Vagina (tissue), 2 donors: ENCODE measurements at regions of chr11 and their contacts with region 1.

Region 1: GRCh38 chr11:123033895-123034294 is 28.0 kb downstream of the HSPA8 start:
- DNase-seq: no peak
- H3K4me3 ChIP-seq: no peak overlapping the region
- H3K27ac ChIP-seq: no peak overlapping the region
- H3K4me1 ChIP-seq: no peaks in the 10 kb centered on the region
- H3K27me3 ChIP-seq: no peaks in the 10 kb centered on the region
- CTCF ChIP-seq: peak in 1 of 3 experiments; percentile 3
- POLR2A ChIP-seq: no peak

Region 2: DNA sequence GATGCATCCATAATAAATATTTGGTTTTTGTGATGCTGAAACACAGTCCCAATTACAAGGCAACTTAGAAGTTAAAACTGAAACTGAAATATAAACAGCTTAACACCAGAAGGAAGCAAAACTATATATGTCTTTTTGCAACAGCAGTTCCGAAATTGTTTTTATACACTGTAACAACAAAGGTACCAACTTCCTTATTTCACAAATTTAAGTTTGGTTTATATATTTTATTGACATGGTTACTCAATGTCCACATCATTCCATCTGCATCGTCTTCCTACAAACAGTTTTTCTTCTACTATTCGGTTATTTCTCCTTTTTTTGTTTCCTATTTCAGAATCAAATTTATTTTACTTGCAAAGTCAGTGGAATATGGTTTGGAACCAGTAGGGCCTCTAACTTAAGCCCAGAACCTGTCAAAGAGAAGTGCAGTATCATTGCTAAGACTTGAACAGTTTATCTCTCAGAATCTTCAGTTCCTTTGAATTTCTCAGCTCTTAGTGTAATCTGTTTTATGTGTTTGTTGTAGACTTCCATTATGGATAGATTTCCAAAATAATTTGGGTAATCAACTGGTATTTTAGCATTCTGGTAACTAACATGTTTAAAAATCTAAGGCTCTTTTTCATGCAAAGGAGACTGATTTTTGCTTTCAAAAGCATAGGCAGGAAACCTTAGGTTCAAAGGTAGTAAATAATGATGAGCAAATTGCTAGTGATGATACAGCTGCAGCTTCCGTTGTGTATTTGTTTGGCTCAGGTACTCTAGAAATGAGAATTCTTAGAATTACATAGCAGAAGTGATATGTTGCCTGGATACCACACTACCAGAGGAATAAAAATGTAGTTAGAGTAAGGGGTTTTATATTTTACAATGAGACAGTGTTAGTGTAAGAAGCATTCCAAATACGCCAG is 36.3 kb after region 1 on chr11:
- intact Hi-C with region 1: no loop called
- DNase-seq: no peak
- H3K4me3 ChIP-seq: peak overlapping the region; percentile 8 to 21
- H3K27ac ChIP-seq: peak overlapping the region; percentile 59
- H3K4me1 ChIP-seq: peaks cover 11% of the 10 kb centered on the region
- H3K27me3 ChIP-seq: no peaks in the 10 kb centered on the region
- CTCF ChIP-seq: no peak
- POLR2A ChIP-seq: no peak

Region 3: DNA sequence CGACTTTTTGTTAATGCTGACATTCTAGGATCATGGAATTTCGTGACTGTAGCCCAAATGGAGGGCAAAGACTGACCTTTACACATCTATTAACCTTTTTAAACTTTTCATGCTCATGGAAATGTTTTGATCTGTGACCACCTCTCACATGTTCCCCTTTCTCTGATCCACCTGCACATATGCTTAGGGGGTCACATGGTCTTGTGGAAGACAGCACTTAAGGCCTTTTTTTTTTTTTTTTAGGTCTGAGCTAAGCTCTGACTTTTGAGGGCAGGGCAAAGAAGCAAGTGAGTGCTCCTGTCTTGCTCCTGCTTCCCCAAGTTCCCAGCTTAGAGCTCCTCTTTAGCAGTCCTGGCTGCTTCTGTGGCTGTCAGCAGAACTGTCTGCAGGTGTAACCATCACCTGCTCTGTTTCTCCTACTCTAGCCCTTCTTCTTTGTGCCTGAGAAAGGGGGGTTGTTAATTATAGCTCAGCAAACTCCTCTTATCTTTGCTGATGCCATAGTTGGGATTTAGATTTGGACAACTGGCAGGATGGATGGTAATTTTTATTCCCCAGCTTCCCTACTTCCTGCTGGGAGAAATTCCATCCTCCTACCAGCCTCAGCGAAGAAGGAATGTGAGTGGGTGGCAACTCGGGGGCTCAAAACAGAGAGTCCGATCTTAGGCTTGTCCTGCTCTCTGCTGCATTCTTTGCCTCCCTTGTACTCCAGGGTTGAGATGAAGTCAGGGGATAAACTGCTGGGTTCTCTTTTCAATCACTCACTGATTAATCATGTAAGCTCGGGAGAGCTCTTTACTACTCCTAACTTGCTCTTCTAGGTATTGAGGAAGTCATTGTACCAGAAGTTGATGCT is 460.5 kb after region 1 on chr11:
- intact Hi-C with region 1: loop called (anchors 5 kb)
- DNase-seq: no peak
- H3K4me3 ChIP-seq: no peak overlapping the region
- H3K27ac ChIP-seq: no peak overlapping the region
- H3K4me1 ChIP-seq: no peaks in the 10 kb centered on the region
- H3K27me3 ChIP-seq: no peaks in the 10 kb centered on the region
- CTCF ChIP-seq: no peak
- POLR2A ChIP-seq: no peak